ENCODE measurements at regions of chr11 and their contacts with region 1.

Region 1: DNA sequence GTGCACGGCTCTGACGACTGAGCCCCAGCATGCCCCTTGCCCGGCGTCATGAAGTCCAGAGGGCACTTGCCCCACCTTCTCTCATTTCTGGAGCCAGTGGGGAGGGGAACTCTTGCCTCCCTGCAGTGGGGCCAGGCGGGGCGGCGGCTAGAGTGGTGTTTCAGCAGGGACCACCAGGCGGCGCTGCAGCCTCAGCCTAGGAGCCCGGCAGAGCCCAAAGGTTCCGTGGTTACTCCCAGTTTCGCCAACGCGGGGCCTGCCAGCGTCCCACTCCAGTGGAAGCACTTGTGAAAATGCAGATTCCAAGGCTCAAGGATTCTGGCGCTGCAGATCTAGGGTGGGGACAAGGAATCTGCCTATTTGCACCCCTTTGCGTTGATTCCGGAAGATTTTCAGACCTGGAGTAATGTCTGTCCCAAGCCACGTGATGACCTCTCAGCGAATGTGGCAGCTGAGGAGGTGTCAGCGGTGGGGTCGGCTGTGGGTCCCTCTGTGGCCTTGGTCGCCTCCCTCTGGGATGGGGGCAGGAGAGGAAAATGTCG is 55.7 kb downstream of the CD82 start:
- DNase-seq: peak; percentile 53 to 82
- H3K4me3 ChIP-seq: no peak overlapping the region
- H3K27ac ChIP-seq: no peak overlapping the region
- H3K4me1 ChIP-seq: peaks cover 0 to 20% (median 11%) of the 10 kb centered on the region in 4 donors
- H3K27me3 ChIP-seq: no peaks in the 10 kb centered on the region
- CTCF ChIP-seq: peak; percentile 97 to 99

Region 2: DNA sequence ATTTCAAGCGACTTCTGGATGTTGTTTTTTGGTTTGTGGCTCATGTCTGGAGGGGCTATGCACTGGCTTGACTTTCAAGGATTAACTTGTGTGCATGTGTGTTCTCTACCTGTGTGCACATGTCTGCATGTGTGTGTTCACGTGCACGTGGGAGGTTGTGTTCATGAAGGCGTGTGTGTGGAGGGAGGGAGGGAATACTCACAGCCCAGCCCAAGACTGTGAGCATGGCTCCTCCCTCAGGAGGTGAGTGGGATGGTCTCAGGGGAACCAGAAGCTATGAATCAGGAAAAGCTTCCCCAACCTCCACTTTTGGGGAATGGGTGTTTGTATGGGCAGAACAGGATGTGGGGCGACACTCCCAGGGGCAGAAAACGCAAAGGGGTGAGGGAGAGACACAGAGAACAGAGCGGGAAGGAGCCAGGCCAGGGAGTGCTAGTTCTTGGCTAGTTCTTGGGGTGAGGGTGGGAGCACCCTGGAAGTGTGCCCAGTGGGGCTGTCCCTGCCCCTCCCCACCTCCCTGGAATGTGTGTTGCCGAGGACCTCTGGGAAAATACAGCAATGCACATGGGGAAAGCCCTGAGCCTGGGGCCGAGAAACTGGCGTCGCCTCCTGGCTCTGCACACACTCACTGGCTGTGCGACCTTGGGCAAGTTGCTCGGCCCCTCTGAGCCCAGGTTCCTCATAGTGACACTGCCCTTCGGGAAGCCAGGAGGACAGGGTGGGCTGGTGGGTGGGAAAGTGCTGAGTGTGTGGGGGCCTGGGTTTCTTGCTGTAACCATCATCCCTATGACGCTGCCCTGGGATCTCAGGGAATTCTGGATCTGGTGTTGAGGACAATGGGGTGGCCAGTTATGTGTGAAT is 294.4 kb before region 1 on chr11:
- intact Hi-C with region 1: no loop called
- DNase-seq: no peak
- H3K4me3 ChIP-seq: no peak overlapping the region
- H3K27ac ChIP-seq: no peak overlapping the region
- H3K4me1 ChIP-seq: peaks cover 0 to 15% (median 10%) of the 10 kb centered on the region in 4 donors
- H3K27me3 ChIP-seq: peaks cover 0 to 79% of the 10 kb centered on the region in 2 donors
- CTCF ChIP-seq: no peak

Region 3: DNA sequence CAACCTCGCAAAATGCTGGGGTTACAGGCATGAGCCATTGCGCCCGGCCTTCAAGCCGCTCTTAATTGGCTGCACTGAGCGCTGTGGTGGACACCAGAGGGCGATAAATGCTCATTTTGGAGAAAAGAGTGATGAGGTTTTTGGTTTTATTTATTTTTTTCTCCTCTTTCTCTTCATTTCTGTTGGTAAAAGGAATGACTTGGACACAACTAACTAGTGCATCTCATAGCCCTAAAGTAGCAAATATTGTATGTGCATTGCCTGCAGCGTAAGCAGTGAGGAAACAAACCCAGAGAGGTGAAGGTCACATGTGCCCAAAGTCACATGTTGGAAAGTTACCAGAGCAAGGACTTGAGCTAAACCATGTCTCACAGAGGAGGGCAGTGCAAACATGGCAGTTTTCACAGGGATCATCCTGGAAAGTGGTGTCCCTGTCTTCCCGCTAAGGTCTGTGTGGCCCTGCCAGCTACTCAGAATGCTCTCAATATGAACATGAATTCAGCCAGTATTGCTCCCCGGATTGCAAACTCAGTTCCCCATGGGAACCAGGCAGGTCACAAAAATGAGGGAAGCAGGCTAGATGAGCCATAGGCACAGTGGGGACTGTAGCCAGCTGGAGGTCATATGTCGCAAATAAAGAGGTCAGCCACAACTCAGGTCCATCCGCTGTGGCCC is 64.3 kb before region 1 on chr11:
- intact Hi-C with region 1: loop called (anchors 2 kb)
- DNase-seq: peak; percentile 70 to 79
- H3K4me3 ChIP-seq: no peak overlapping the region
- H3K27ac ChIP-seq: no peak overlapping the region
- H3K4me1 ChIP-seq: peaks cover 0 to 6% (median 2%) of the 10 kb centered on the region in 4 donors
- H3K27me3 ChIP-seq: no peaks in the 10 kb centered on the region
- CTCF ChIP-seq: peak; percentile 91 to 93

Region 4: DNA sequence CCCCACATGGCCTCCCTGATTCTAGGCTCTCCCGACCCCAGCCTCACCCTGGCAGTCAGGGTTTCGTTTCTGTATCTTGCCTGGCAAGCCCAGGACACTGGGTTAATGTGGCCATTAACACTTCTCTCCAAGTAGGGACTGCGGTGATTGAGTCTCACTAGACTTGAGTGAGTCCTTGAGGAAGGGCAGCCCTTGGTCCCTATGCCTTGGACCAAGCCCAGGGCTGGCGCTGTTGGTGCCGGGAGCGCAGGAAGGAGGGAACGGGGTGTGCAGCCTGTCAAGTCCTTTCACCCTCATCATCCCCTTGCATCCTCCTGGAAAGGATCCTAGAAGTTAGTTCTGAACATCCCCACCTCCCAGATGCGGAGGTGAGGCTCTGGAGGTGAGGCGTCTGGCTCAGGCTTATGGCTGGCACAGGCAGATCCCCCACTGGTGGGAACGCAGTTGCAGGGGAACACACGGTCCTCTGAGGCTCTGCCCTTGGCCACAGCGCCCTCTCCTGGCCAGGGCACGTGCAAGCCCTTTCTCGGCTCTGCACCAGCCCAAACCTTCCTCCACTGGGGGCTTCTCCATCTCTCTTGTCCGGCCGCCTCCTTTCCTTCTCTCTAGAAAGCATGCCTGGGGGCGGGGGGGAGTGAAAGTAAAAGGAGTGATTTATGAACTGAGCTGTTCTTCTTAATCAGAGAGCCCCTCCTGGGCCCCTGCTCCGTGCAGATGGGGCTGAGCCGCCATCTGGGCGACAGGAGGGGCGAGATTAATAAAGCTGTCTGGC is 272.8 kb after region 1 on chr11:
- intact Hi-C with region 1: loop called (anchors 5 kb)
- DNase-seq: peak; percentile 51 to 85
- H3K4me3 ChIP-seq: peak overlapping the region; percentile 4 to 23
- H3K27ac ChIP-seq: peak overlapping the region; percentile 61 to 68
- H3K4me1 ChIP-seq: peaks cover 0 to 27% (median 9%) of the 10 kb centered on the region in 4 donors
- H3K27me3 ChIP-seq: no peaks in the 10 kb centered on the region
- CTCF ChIP-seq: peak; percentile 92 to 94

Region 5: DNA sequence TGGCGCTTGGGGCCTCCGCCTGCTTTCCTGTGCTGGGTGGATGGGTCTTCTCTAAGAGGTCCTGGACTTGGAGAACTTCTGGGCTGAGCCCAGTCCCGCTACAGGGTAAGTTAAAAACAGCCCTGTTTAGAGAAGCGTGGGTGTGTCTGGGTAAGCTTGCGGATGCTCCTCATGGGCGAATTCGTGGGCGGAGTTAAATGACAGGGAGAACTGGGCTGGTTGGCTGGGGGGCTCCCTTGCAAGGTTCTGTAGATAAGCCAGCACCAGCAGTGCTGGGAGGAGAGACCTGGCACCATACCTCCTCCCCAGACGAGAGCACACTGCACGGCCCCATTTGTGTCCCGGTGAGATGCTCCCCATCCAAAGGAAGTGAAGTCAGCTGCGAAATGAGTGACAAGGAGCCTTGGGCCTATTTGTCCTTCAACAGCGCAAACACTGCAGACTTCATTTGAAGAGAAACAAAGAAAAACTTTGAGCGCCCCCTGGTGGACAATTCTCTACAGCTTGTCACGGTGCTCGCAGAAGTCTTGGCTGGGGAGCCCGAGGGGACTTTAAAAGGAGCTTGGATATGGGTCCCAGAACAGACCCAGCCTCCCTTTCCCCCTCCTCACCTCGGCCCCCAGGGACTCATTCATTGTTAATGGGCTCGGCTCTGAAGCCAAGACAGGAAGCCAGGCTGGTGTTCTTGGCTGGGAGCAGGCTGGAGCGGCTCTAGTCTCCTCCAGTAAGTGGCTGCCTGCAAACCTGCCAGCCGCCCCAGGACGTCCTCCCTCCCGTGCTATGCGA is 290.0 kb after region 1 on chr11:
- intact Hi-C with region 1: loop called (anchors 2 kb)
- DNase-seq: peak; percentile 82 to 90
- H3K4me3 ChIP-seq: no peak overlapping the region
- H3K27ac ChIP-seq: peak overlapping the region in 1 of 2 donors; percentile 36
- H3K4me1 ChIP-seq: peaks cover 0 to 20% (median 13%) of the 10 kb centered on the region in 4 donors
- H3K27me3 ChIP-seq: no peaks in the 10 kb centered on the region
- CTCF ChIP-seq: peak; percentile 81 to 88

Measured in tibial artery (tissue), 4 donors.